ENCODE measurements at regions of chr16 and their contacts with region 1.

Region 1: DNA sequence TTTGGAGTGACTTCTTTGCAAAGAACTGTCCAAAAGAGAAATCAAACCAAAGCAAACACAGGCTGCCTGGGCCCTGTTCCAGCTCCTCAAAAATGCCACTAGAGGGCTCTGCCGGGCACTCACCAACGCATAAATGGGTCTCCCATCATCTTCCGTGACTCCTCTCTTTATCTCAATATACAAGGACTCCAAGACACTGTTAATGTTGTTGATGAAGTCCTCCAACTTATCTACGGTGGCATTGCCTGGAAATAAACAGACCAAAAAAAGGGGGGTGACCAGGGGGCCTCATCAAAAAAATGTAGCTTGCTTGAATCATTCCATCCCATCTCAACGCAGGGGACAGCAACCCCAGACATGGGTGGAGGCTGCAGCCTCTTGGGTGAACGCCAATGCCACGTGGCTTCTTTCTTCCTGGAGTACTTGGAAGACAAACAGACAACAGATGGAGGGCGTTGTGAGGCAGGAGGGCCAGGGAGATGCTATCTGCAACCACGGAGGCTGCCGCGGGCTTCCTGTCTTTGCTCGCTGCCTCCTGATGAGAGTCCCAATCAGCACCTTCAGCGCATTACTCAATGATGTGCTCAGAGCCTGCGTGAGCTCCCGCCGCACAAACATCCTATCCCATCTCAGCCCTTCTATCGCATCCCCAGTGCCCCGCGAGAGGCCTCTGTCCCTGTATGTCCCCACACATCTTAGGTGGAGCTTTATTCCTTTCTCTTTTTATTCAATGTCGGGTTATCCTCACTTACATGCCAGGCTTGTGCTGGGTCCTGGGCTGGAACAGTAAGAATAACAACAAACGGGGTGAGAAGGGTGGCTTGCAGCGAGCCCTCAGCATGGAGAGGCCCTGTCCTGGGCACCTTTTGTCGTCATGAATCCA is 32.0 kb downstream of the KDM8 start:
- DNase-seq: peak; percentile 97
- H3K4me3 Mint-ChIP-seq: peak overlapping the region; percentile 74
- H3K27ac Mint-ChIP-seq: peak overlapping the region; percentile 99
- H3K4me1 Mint-ChIP-seq: peaks cover 99% of the 10 kb centered on the region
- H3K27me3 Mint-ChIP-seq: no peaks in the 10 kb centered on the region

Region 2: GRCh38 chr16:27203429-27204231 is 31.7 kb before region 1 on chr16 and contains the start of gene KDM8:
- CTCF ChIA-PET with region 1: interaction called, 11 read pairs
- DNase-seq: peak; percentile 100
- H3K4me3 Mint-ChIP-seq: peak within 1 kb of the TSS; percentile 97
- H3K27ac Mint-ChIP-seq: peak within 1 kb of the TSS; percentile 99
- H3K4me1 Mint-ChIP-seq: peaks cover 69% of the 10 kb centered on the region
- H3K27me3 Mint-ChIP-seq: no peaks in the 10 kb centered on the region

Region 3: GRCh38 chr16:27268376-27269299 is 33.3 kb after region 1 on chr16 and contains the start of gene NSMCE1:
- CTCF ChIA-PET with region 1: interaction called, 17 read pairs
- DNase-seq: peak; percentile 98
- H3K4me3 Mint-ChIP-seq: peak within 1 kb of the TSS; percentile 92
- H3K27ac Mint-ChIP-seq: peak within 1 kb of the TSS; percentile 92
- H3K4me1 Mint-ChIP-seq: peaks cover 76% of the 10 kb centered on the region
- H3K27me3 Mint-ChIP-seq: no peaks in the 10 kb centered on the region

Region 4: GRCh38 chr16:27321011-27321915 is 86.0 kb after region 1 on chr16:
- CTCF ChIA-PET with region 1: interaction called, 159 read pairs
- DNase-seq: no peak
- H3K4me3 Mint-ChIP-seq: peak overlapping the region; percentile 31
- H3K27ac Mint-ChIP-seq: peak overlapping the region; percentile 52
- H3K4me1 Mint-ChIP-seq: peaks cover 98% of the 10 kb centered on the region
- H3K27me3 Mint-ChIP-seq: no peaks in the 10 kb centered on the region

Region 5: GRCh38 chr16:27367461-27368357 is 132.4 kb after region 1 on chr16:
- CTCF ChIA-PET with region 1: interaction called, 122 read pairs
- DNase-seq: peak; percentile 92
- H3K4me3 Mint-ChIP-seq: peak overlapping the region; percentile 50
- H3K27ac Mint-ChIP-seq: peak overlapping the region; percentile 99
- H3K4me1 Mint-ChIP-seq: peaks cover 80% of the 10 kb centered on the region
- H3K27me3 Mint-ChIP-seq: no peaks in the 10 kb centered on the region